Aorta (tissue), 5 donors: ENCODE measurements at regions of chr17 and their contacts with region 1.

Region 1: DNA sequence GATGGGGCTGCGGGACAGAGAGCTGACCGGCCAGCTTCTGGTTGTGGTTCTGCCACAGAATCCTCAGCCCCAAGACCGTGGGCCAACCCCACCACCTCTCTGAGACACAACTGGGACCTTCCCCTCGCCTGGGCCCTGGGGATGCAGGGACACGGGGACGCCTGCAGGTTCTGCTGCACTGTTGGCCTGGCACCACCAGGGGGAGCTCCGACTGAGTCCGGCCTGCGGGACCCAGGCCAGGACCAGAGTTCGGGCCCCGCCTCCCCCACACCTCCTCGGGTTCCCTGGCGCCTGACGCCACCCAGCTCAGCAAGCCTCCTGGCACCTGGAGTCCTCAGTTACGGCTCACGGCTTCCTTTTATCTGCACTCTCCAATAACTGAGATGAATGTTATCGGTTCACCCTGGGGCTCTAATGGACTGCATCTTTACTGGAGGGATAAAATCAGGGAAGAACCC is 27.3 kb downstream of the TBC1D16 start:
- DNase-seq: peak; percentile 83 to 95
- ATAC-seq: peak; percentile 89
- H3K4me3 ChIP-seq: no peak overlapping the region
- H3K27ac ChIP-seq: no peak overlapping the region
- H3K4me1 ChIP-seq: no peaks in the 10 kb centered on the region
- H3K27me3 ChIP-seq: no peaks in the 10 kb centered on the region

Region 2: GRCh38 chr17:80043963-80044362 is 35.6 kb after region 1 on chr17:
- intact Hi-C with region 1: loop called in 1 of 2 experiments (anchors 1 kb)
- DNase-seq: no peak
- ATAC-seq: no peak
- H3K4me3 ChIP-seq: no peak overlapping the region
- H3K27ac ChIP-seq: no peak overlapping the region
- H3K4me1 ChIP-seq: no peaks in the 10 kb centered on the region
- H3K27me3 ChIP-seq: no peaks in the 10 kb centered on the region

Region 3: DNA sequence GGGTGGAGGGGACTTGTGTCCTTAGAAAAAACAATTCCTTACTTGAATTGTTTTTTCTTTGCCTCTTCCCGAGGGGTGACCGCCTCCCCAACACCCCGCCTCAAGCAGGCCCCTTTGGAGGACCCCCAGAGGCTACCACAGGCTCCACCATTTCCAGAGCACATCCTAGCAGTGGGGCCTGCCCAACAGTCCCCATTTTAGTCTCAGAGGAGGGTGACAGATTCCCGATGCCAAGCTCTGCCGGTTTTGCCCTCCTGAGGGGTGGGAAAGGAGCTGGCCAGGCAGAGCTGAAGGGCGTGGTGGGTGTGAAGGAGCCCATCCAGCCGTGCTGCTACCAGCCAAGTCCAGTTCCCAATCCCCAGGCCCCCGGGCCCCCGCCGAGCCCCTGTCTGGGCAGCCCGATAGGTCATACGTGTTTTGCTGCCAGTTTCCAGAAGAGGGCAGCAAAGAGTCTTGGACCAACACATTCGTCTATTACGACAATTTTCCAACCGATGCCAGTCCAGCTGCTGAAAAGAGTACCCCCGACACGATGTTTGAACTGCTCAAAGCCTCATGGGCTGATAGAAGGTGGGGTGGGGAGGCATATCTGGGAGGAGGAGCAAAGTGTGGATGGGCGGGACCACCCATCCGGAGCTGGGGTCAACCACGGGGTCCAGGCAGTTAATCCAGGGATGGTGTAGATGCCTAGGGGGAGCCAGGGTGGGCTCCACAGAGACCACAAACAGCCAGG is 74.2 kb after region 1 on chr17:
- intact Hi-C with region 1: loop called (anchors 5 to 10 kb)
- DNase-seq: no peak
- ATAC-seq: peak; percentile 77
- H3K4me3 ChIP-seq: no peak overlapping the region
- H3K27ac ChIP-seq: no peak overlapping the region
- H3K4me1 ChIP-seq: no peaks in the 10 kb centered on the region
- H3K27me3 ChIP-seq: no peaks in the 10 kb centered on the region